Prostate gland (tissue), 2 donors: ENCODE measurements at regions of chr14 and their contacts with region 1.

Region 1: GRCh38 chr14:69242311-69243224 is 17.4 kb upstream of the GALNT16 start:
- DNase-seq: peak; percentile 62
- H3K4me3 ChIP-seq: no peak overlapping the region
- H3K27ac ChIP-seq: no peak overlapping the region
- H3K4me1 ChIP-seq: no peaks in the 10 kb centered on the region
- H3K27me3 ChIP-seq: no peaks in the 10 kb centered on the region
- CTCF ChIP-seq: peak; percentile 63 to 82 (median 76)
- POLR2A ChIP-seq: no peak

Region 2: DNA sequence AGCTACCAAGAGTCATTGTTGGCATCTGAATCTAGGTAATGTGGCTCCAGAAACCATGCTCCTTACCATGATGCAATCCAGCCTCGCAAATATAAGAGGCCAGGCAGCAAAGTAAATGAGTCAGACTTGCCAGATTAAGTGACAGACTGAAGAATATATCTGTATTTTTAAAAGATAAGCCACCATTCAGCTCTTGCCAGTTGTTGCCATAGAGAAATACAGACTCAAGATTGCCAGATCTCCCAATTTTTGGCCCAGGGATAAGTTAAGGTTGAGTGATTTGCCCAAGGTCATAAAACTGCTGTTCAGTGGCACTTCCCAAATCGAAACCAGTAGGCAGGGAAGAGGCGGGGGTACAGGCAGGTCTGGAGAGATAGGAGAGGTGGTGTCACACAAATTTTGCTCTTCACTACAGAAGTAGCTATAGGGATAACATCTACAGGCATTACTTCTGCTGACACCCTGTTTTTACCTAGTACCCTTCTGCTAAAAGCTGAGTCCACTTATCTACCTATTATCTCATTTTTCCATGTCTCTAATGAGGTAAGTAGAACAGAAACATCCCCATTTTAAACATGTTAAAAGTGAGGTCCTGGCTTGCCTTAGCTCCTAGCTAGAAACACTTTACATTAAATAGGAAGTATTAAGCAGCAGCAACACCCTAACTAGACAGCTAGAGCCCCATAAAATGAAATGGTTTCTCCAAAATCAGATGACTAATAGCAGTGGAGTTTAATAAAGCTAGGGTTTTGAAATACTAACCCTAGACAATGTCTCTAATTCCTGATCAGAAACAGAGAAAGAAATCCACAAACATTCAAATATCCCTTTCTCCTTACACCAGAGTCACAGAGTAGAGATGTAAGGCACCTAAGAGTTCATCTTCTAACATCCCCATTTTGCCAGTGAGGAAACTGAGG is 109.1 kb before region 1 on chr14:
- intact Hi-C with region 1: loop called (anchors 10 kb)
- DNase-seq: no peak
- H3K4me3 ChIP-seq: no peak overlapping the region
- H3K27ac ChIP-seq: no peak overlapping the region
- H3K4me1 ChIP-seq: peaks cover 5% of the 10 kb centered on the region
- H3K27me3 ChIP-seq: no peaks in the 10 kb centered on the region
- CTCF ChIP-seq: no peak
- POLR2A ChIP-seq: no peak

Region 3: GRCh38 chr14:69363055-69363454 is 120.5 kb after region 1 on chr14:
- intact Hi-C with region 1: loop called (anchors 5 kb)
- DNase-seq: no peak
- H3K4me3 ChIP-seq: no peak overlapping the region
- H3K27ac ChIP-seq: no peak overlapping the region
- H3K4me1 ChIP-seq: no peaks in the 10 kb centered on the region
- H3K27me3 ChIP-seq: no peaks in the 10 kb centered on the region
- CTCF ChIP-seq: peak in 2 of 4 experiments; percentile 48 to 60
- POLR2A ChIP-seq: no peak

Region 4: DNA sequence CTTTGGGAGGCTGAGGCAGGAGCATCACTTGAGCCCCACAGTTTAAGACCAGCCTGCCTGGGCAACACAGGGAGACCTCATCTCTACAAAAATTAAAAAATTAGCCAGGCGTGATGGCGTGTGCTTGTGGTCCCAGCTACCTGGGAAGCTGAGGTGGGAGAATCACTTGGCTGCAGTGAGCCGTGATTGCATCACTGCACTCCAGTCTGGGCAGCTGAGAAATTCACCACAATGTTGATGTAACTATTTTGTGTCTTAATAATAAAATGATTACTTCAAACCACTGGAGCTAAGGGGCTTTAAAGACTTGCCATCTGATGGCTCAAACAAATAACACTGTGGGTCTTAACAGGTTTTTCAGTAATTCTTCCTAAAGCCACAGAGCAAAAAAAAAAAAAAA is 144.7 kb after region 1 on chr14:
- intact Hi-C with region 1: no loop called
- DNase-seq: no peak
- H3K4me3 ChIP-seq: no peak overlapping the region
- H3K27ac ChIP-seq: no peak overlapping the region
- H3K4me1 ChIP-seq: no peaks in the 10 kb centered on the region
- H3K27me3 ChIP-seq: no peaks in the 10 kb centered on the region
- CTCF ChIP-seq: no peak
- POLR2A ChIP-seq: no peak

Region 5: GRCh38 chr14:69459122-69459521 is 216.6 kb after region 1 on chr14:
- intact Hi-C with region 1: loop called (anchors 2 kb)
- DNase-seq: no peak
- H3K4me3 ChIP-seq: no peak overlapping the region
- H3K27ac ChIP-seq: no peak overlapping the region
- H3K4me1 ChIP-seq: no peaks in the 10 kb centered on the region
- H3K27me3 ChIP-seq: no peaks in the 10 kb centered on the region
- CTCF ChIP-seq: no peak
- POLR2A ChIP-seq: no peak

Region 6: GRCh38 chr14:69559581-69560011 is 317.0 kb after region 1 on chr14:
- intact Hi-C with region 1: no loop called
- DNase-seq: no peak
- H3K4me3 ChIP-seq: no peak overlapping the region
- H3K27ac ChIP-seq: no peak overlapping the region
- H3K4me1 ChIP-seq: no peaks in the 10 kb centered on the region
- H3K27me3 ChIP-seq: no peaks in the 10 kb centered on the region
- CTCF ChIP-seq: no peak
- POLR2A ChIP-seq: no peak

Region 7: GRCh38 chr14:69574263-69574953 is 331.8 kb after region 1 on chr14 and contains the start of gene CCDC177:
- intact Hi-C with region 1: loop called (anchors 10 kb)
- DNase-seq: peak; percentile 43
- H3K4me3 ChIP-seq: no peak within 1 kb of the TSS
- H3K27ac ChIP-seq: no peak within 1 kb of the TSS
- H3K4me1 ChIP-seq: peaks cover 15% of the 10 kb centered on the region
- H3K27me3 ChIP-seq: peaks cover 19% of the 10 kb centered on the region
- CTCF ChIP-seq: peak; percentile 64 to 74 (median 71)
- POLR2A ChIP-seq: no peak
- total RNA-seq, gene CCDC177: 0.28 TPM in 1 of 2 donors, not detected in the other